Panc1 (cell line): ENCODE measurements at regions of chr14 and their contacts with region 1.

Region 1: GRCh38 chr14:101480747-101481530 is 80.4 kb upstream of the DIO3 start:
- DNase-seq: peak; percentile 89
- ATAC-seq: peak; percentile 77
- H3K4me3 ChIP-seq: peak overlapping the region in 1 of 2 experiments; percentile 26; a peak in 2 of 4 replicates
- H3K27ac ChIP-seq: peak overlapping the region; percentile 84
- H3K4me1 ChIP-seq: peaks cover 17% of the 10 kb centered on the region
- H3K27me3 ChIP-seq: no peaks in the 10 kb centered on the region
- CTCF ChIP-seq: no peak

Region 2: DNA sequence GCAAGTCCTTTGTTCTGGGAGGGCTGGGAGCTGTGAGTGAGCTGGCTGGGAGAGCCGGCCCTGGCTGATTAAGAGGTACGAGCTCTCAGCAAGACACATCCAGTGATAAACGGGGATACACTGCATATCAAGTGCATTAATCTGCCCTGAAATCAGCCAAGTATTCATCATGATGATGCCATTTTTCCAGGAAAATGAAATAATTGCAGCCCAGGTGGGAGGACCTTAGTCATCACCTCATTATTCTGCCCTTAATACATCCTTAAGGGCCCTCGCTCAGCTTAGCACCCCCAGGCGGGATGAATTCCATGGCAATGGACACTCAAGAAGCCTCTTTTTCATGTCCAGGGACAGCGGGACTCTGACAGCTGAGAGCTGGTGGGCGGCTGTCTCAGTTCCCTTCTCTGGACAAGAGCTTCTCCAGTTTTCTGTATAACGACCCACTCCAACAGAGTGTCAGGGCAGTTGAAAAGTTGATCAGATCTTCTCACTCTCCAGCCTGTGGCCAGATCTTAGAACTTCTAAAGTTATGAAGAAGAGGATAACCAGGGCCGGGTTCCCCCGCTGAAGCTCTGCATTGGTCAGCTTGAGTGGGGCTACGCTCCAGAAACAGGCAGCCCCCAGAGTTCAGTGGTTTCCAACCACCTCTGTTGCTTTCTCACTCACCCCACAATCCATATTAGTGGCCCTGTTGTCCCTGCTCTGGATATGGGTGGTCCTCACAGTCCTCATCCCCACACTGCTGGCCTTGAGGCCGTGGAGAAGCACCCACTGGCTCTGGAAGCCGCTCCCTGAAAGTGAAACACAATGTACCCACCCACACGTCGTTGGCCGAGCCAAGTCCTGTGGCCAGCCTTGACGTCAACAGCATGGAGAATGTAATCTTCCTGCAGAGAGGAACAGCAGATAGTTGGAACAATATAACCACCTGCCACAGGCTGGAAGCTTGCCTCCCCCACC is 225.9 kb before region 1 on chr14:
- CTCF ChIA-PET with region 1: no interaction called
- POLR2A ChIA-PET with region 1: no interaction called
- in situ Hi-C with region 1: no loop called
- intact Hi-C with region 1: no loop called
- DNase-seq: no peak
- ATAC-seq: no peak
- H3K4me3 ChIP-seq: no peak overlapping the region
- H3K27ac ChIP-seq: no peak overlapping the region
- H3K4me1 ChIP-seq: no peaks in the 10 kb centered on the region
- H3K27me3 ChIP-seq: no peaks in the 10 kb centered on the region
- CTCF ChIP-seq: no peak

Region 3: DNA sequence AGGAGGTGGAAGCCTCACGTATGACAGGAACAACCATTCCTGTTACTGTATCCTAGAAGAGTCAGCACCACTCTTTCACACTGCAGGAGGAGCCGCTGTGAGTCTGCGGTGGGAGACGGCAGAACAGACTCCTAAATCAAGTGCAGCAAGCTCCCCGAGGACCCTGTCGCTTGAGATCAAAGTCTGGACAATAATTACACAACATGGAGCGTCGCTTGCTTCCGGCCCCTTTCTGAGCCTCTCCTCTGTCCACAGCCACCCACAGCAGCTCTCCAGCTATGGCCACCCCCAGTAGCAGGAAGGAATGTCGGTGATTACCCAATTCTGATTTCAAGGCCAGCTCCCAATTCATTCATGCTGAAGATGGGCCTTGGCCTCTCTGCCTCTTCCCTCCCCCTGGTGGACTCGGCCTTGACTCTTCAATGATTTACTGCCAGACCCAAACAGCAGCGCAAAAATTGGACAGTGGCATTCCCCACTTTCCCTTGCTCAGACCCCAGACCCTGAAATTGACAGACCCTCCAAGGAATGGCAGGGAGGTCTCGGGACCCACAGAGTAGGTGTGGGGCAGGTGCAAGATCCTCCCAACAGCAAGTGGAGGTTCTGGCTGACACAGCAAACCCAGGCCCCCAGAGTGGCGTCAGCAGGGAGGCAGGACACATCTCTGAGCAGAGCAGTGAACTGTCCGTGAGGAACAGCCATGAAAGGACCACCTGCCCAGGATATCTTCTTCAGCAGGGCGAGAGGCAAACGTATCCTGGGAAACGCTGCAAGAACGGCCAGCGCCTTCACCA is 192.3 kb before region 1 on chr14:
- CTCF ChIA-PET with region 1: no interaction called
- POLR2A ChIA-PET with region 1: no interaction called
- in situ Hi-C with region 1: no loop called
- intact Hi-C with region 1: no loop called
- DNase-seq: no peak
- ATAC-seq: no peak
- H3K4me3 ChIP-seq: no peak overlapping the region
- H3K27ac ChIP-seq: no peak overlapping the region
- H3K4me1 ChIP-seq: no peaks in the 10 kb centered on the region
- H3K27me3 ChIP-seq: no peaks in the 10 kb centered on the region
- CTCF ChIP-seq: no peak

Region 4: DNA sequence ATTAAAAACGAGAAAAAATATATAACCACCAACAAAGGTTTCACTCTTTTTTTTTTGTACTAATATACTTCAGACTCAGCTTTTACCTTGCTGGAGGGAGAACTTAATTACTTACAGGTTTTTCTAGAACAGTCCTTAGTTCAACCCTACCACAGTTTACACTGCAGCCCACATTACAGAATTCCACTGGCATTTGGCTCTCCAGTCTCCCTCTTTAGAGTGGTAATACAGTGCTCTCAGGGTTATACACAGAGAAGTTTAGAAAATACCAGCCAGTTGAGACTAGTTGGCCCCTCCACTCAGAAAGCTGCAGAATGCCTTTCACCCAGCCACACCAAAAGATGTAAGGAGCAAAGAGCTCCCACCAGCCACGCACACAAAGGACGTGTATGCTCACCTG is 41.9 kb before region 1 on chr14:
- CTCF ChIA-PET with region 1: no interaction called
- POLR2A ChIA-PET with region 1: interaction called, 15 read pairs
- in situ Hi-C with region 1: no loop called
- intact Hi-C with region 1: no loop called
- DNase-seq: no peak
- ATAC-seq: no peak
- H3K4me3 ChIP-seq: no peak overlapping the region
- H3K27ac ChIP-seq: no peak overlapping the region
- H3K4me1 ChIP-seq: no peaks in the 10 kb centered on the region
- H3K27me3 ChIP-seq: no peaks in the 10 kb centered on the region
- CTCF ChIP-seq: no peak

Region 5: DNA sequence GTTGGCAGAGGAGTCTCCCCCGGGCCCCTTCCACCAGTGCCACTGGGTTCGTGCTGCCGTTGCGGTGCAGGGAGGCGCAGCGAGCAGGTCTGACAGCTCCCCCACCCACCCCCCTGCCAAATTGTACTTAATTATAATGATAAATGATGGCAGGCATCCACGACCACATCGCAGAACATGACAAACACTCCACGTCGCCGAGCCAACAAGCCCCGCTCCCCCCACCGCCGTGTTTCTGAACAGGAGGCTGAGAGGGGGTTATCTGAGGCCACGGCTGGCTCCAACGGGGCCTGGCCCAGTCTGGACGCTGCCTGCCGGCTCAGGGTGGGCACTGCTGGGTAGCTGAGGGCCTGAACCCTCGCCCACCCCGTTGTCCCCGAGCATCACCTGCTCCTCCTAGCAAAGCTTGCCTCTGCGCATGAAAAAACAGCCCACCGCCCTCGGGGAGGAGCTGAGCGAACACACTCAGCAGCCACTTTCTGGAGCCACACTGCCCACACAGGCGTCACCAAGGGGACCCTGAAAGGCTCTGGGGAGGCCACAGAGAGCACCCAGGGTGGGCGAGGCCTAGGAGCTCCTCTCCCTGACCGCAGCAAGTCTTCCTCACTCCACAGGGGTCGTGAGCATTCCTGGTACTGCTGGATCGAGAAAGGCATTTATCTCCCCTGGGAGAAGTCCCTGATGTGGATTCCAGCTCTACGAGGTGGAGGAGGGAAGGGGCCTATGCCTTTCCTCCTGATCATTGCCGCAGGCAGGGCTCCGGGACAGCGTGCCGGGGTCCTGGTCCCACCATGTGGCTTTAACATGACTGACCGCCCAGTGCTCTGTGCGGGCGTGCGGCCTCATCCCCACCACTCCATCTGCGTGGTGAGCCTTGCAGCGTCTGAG is 44.9 kb after region 1 on chr14:
- CTCF ChIA-PET with region 1: no interaction called
- POLR2A ChIA-PET with region 1: no interaction called
- in situ Hi-C with region 1: no loop called
- intact Hi-C with region 1: no loop called
- DNase-seq: no peak
- ATAC-seq: no peak
- H3K4me3 ChIP-seq: no peak overlapping the region
- H3K27ac ChIP-seq: no peak overlapping the region
- H3K4me1 ChIP-seq: no peaks in the 10 kb centered on the region
- H3K27me3 ChIP-seq: no peaks in the 10 kb centered on the region
- CTCF ChIP-seq: no peak